RWPE1 (cell line): ENCODE measurements at regions of chr14 and their contacts with region 1.

Region 1: GRCh38 chr14:74275241-74275841 is 27.4 kb downstream of the ABCD4 start:
- DNase-seq: peak; percentile 57
- H3K27ac ChIP-seq: no peak overlapping the region
- CTCF ChIP-seq: no peak

Region 2: GRCh38 chr14:74263921-74264320 is 11.4 kb before region 1 on chr14:
- CTCF ChIA-PET with region 1: no interaction called
- POLR2A ChIA-PET with region 1: no interaction called
- DNase-seq: no peak
- H3K27ac ChIP-seq: no peak overlapping the region
- CTCF ChIP-seq: no peak

Region 3: GRCh38 chr14:74599321-74599761 is 324.0 kb after region 1 on chr14:
- CTCF ChIA-PET with region 1: no interaction called
- POLR2A ChIA-PET with region 1: interaction called, 11 read pairs
- DNase-seq: no peak
- H3K27ac ChIP-seq: peak overlapping the region; percentile 59
- CTCF ChIP-seq: no peak